ENCODE measurements at regions of chr13 and their contacts with region 1.

Region 1: GRCh38 chr13:75876360-75877050 is 240.4 kb downstream of the LMO7 start:
- DNase-seq: peak; percentile 55
- H3K4me3 ChIP-seq: peak overlapping the region in 1 of 2 experiments; percentile 17; a peak in 1 of 4 replicates
- H3K27ac ChIP-seq: no peak overlapping the region
- H3K4me1 ChIP-seq: peaks cover 0 to 2% of the 10 kb centered on the region in 2 experiments; a peak in 2 of 4 replicates
- H3K27me3 ChIP-seq: no peaks in the 10 kb centered on the region
- CTCF ChIP-seq: peak; percentile 91
- EP300 ChIP-seq: no peak
- RAD21 ChIP-seq: peak; percentile 95

Region 2: GRCh38 chr13:75843074-75843473 is 33.4 kb before region 1 on chr13:
- CTCF ChIA-PET with region 1: no interaction called
- POLR2A ChIA-PET with region 1: no interaction called
- DNase-seq: no peak
- H3K4me3 ChIP-seq: no peak overlapping the region
- H3K27ac ChIP-seq: no peak overlapping the region
- H3K4me1 ChIP-seq: no peaks in the 10 kb centered on the region; a peak in 1 of 4 replicates
- H3K27me3 ChIP-seq: no peaks in the 10 kb centered on the region
- CTCF ChIP-seq: no peak
- EP300 ChIP-seq: no peak
- RAD21 ChIP-seq: no peak

Region 3: DNA sequence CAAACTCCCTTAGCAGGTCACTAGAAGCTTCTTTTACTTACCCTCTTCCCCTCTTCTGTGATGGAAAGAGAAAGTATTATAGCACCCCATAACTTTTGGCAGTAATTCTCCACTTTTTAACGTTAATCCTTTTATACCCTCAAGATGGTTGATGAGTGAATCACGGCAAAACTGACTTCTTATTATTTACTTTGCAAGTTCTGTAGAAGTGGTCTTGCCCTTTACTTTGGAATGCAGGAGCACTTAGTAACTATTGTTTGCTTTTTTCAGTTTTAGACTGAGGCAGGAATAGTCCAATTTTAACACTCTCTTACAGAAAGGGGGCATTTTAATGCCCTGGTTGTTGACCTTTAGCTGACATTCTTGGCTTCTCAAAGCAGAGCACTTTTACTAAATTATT is 19.8 kb after region 1 on chr13:
- CTCF ChIA-PET with region 1: interaction called, 13 read pairs
- POLR2A ChIA-PET with region 1: no interaction called
- DNase-seq: no peak
- H3K4me3 ChIP-seq: no peak overlapping the region
- H3K27ac ChIP-seq: no peak overlapping the region
- H3K4me1 ChIP-seq: no peaks in the 10 kb centered on the region
- H3K27me3 ChIP-seq: no peaks in the 10 kb centered on the region
- CTCF ChIP-seq: no peak
- EP300 ChIP-seq: no peak
- RAD21 ChIP-seq: no peak

Region 4: GRCh38 chr13:75946536-75947284 is 70.2 kb after region 1 on chr13:
- CTCF ChIA-PET with region 1: no interaction called
- POLR2A ChIA-PET with region 1: no interaction called
- DNase-seq: no peak
- H3K4me3 ChIP-seq: no peak overlapping the region
- H3K27ac ChIP-seq: no peak overlapping the region
- H3K4me1 ChIP-seq: no peaks in the 10 kb centered on the region; a peak in 1 of 4 replicates
- H3K27me3 ChIP-seq: 0 out of 2 replicates have a peak, but pooled peaks cover 3% of the 10 kb centered on the region
- CTCF ChIP-seq: no peak
- EP300 ChIP-seq: no peak
- RAD21 ChIP-seq: no peak

Region 5: GRCh38 chr13:76009491-76009890 is 133.0 kb after region 1 on chr13:
- CTCF ChIA-PET with region 1: interaction called, 11 read pairs
- POLR2A ChIA-PET with region 1: no interaction called
- DNase-seq: no peak
- H3K4me3 ChIP-seq: no peak overlapping the region
- H3K27ac ChIP-seq: no peak overlapping the region
- H3K4me1 ChIP-seq: no peaks in the 10 kb centered on the region
- H3K27me3 ChIP-seq: no peaks in the 10 kb centered on the region
- CTCF ChIP-seq: no peak
- EP300 ChIP-seq: peak in 1 of 2 experiments; percentile 33; a peak in 1 of 4 replicates
- RAD21 ChIP-seq: no peak

Region 6: GRCh38 chr13:76473552-76474134 is 597.1 kb after region 1 on chr13:
- CTCF ChIA-PET with region 1: interaction called, 21 read pairs
- POLR2A ChIA-PET with region 1: no interaction called
- DNase-seq: peak; percentile 53
- H3K4me3 ChIP-seq: no peak overlapping the region; a peak in 1 of 4 replicates
- H3K27ac ChIP-seq: no peak overlapping the region
- H3K4me1 ChIP-seq: no peaks in the 10 kb centered on the region
- H3K27me3 ChIP-seq: peaks cover 10% of the 10 kb centered on the region; the same call in 1 of the 2 replicates
- CTCF ChIP-seq: peak; percentile 87
- EP300 ChIP-seq: no peak
- RAD21 ChIP-seq: peak; percentile 89

Region 7: GRCh38 chr13:76903544-76904162 is 1027.1 kb after region 1 on chr13:
- CTCF ChIA-PET with region 1: interaction called, 26 read pairs
- POLR2A ChIA-PET with region 1: no interaction called
- DNase-seq: peak; percentile 73
- H3K4me3 ChIP-seq: no peak overlapping the region
- H3K27ac ChIP-seq: no peak overlapping the region
- H3K4me1 ChIP-seq: no peaks in the 10 kb centered on the region; a peak in 2 of 4 replicates
- H3K27me3 ChIP-seq: peaks cover 5% of the 10 kb centered on the region; the same call in 1 of the 2 replicates
- CTCF ChIP-seq: peak; percentile 99
- EP300 ChIP-seq: no peak
- RAD21 ChIP-seq: peak; percentile 99

Measured in SK-N-SH (cell line).